ENCODE measurements at regions of chr12 and their contacts with region 1.

Region 1: GRCh38 chr12:54032627-54033100 is at the start of gene HOXC5:
- DNase-seq: peak; percentile 82 to 86 (median 84)
- ATAC-seq: peak; percentile 70
- H3K4me3 ChIP-seq: no peak within 1 kb of the TSS
- H3K27ac ChIP-seq: no peak within 1 kb of the TSS
- H3K4me1 ChIP-seq: peaks cover 0 to 28% of the 10 kb centered on the region in 2 experiments; a peak in 2 of 5 replicates
- H3K27me3 ChIP-seq: no peaks in the 10 kb centered on the region
- CTCF ChIP-seq: peak; percentile 95 to 96 (median 95)
- EP300 ChIP-seq: 0 out of 2 replicates have a peak, but pooled peaks have one; percentile 17
- POLR2A ChIP-seq: no peak
- RAD21 ChIP-seq: peak; percentile 80 to 89
- polyA plus RNA-seq, gene HOXC5: not detected

Region 2: GRCh38 chr12:54134850-54135249 is 102.2 kb after region 1 on chr12:
- CTCF ChIA-PET with region 1: interaction called, 11 read pairs
- POLR2A ChIA-PET with region 1: no interaction called
- in situ Hi-C with region 1: loop called (anchors 5 kb)
- intact Hi-C with region 1: loop called (anchors 1 kb)
- DNase-seq: peak in 1 of 4 experiments; percentile 29
- ATAC-seq: peak; percentile 72
- H3K4me3 ChIP-seq: no peak overlapping the region
- H3K27ac ChIP-seq: no peak overlapping the region
- H3K4me1 ChIP-seq: no peaks in the 10 kb centered on the region
- H3K27me3 ChIP-seq: peaks cover 27 to 72% of the 10 kb centered on the region in 2 experiments; a peak in 4 of 5 replicates
- CTCF ChIP-seq: peak; percentile 31 to 46 (median 42); a peak in 4 of 6 replicates
- EP300 ChIP-seq: no peak
- POLR2A ChIP-seq: no peak
- RAD21 ChIP-seq: peak; percentile 19 to 68; a peak in 3 of 4 replicates

Region 3: GRCh38 chr12:54201001-54201794 is 168.5 kb after region 1 on chr12:
- CTCF ChIA-PET with region 1: interaction called, 36 read pairs
- POLR2A ChIA-PET with region 1: interaction called, 4 read pairs
- in situ Hi-C with region 1: loop called (anchors 10 kb)
- intact Hi-C with region 1: no loop called
- DNase-seq: peak; percentile 82 to 86 (median 84)
- ATAC-seq: peak; percentile 92
- H3K4me3 ChIP-seq: no peak overlapping the region
- H3K27ac ChIP-seq: no peak overlapping the region
- H3K4me1 ChIP-seq: peaks cover 28 to 31% of the 10 kb centered on the region in 2 experiments
- H3K27me3 ChIP-seq: peaks cover 2 to 5% of the 10 kb centered on the region in 2 experiments; a peak in 2 of 5 replicates
- CTCF ChIP-seq: peak; percentile 98 to 99 (median 98)
- EP300 ChIP-seq: no peak
- POLR2A ChIP-seq: no peak
- RAD21 ChIP-seq: peak; percentile 77 to 87

Measured in K562 (cell line).